Sigmoid colon (tissue), 7 donors: ENCODE measurements at regions of chr17 and their contacts with region 1.

Region 1: GRCh38 chr17:80364216-80364618 is 50.8 kb upstream of the ENDOV start:
- DNase-seq: peak; percentile 65
- H3K4me3 ChIP-seq: no peak overlapping the region
- H3K27ac ChIP-seq: no peak overlapping the region
- H3K4me1 ChIP-seq: no peaks in the 10 kb centered on the region
- H3K27me3 ChIP-seq: no peaks in the 10 kb centered on the region
- CTCF ChIP-seq: peak in 1 of 4 experiments; percentile 23
- EP300 ChIP-seq: no peak
- POLR2A ChIP-seq: no peak

Region 2: GRCh38 chr17:80195731-80196529 is 168.3 kb before region 1 on chr17:
- intact Hi-C with region 1: loop called (anchors 10 kb)
- DNase-seq: no peak
- H3K4me3 ChIP-seq: no peak overlapping the region
- H3K27ac ChIP-seq: no peak overlapping the region
- H3K4me1 ChIP-seq: no peaks in the 10 kb centered on the region
- H3K27me3 ChIP-seq: peaks cover 0 to 23% (median 12%) of the 10 kb centered on the region in 3 donors
- CTCF ChIP-seq: peak; percentile 64 to 90 (median 78)
- EP300 ChIP-seq: no peak
- POLR2A ChIP-seq: no peak

Region 3: GRCh38 chr17:80414803-80415625 is 50.8 kb after region 1 on chr17 and contains the start of gene ENDOV:
- intact Hi-C with region 1: no loop called
- DNase-seq: peak; percentile 97
- H3K4me3 ChIP-seq: peak within 1 kb of the TSS; percentile 67 to 99 (median 78)
- H3K27ac ChIP-seq: peak within 1 kb of the TSS; percentile 89 to 97 (median 94)
- H3K4me1 ChIP-seq: peaks cover 0 to 39% (median 28%) of the 10 kb centered on the region in 4 donors
- H3K27me3 ChIP-seq: no peaks in the 10 kb centered on the region
- CTCF ChIP-seq: no peak
- EP300 ChIP-seq: peak in 1 of 4 donors; percentile 5
- POLR2A ChIP-seq: peak; percentile 22 to 32
- total RNA-seq, gene ENDOV: 9.5 to 23.5 (median 16.7) TPM